GM12878 (cell line): ENCODE measurements at regions of chr14 and their contacts with region 1.

Region 1: GRCh38 chr14:51996148-51996746 is 6.9 kb downstream of the RTRAF start:
- DNase-seq: no peak
- ATAC-seq: 0 out of 3 replicates have a peak, but pooled peaks have one; percentile 22
- H3K4me3 ChIP-seq: no peak overlapping the region
- H3K27ac ChIP-seq: no peak overlapping the region
- H3K4me1 ChIP-seq: peaks cover under 1% of the 10 kb centered on the region
- H3K27me3 ChIP-seq: no peaks in the 10 kb centered on the region
- CTCF ChIP-seq: peak; percentile 50 to 60 (median 56); a peak in 5 of 6 replicates
- EP300 ChIP-seq: no peak
- POLR2A ChIP-seq: no peak
- RAD21 ChIP-seq: peak; percentile 65

Region 2: GRCh38 chr14:51828017-51828797 is 168.0 kb before region 1 on chr14:
- CTCF ChIA-PET with region 1: interaction called, 12 read pairs
- POLR2A ChIA-PET with region 1: no interaction called
- RAD21 ChIA-PET with region 1: no interaction called
- SMC1A ChIA-PET with region 1: no interaction called
- in situ Hi-C with region 1: no loop called
- intact Hi-C with region 1: no loop called
- DNase-seq: peak; percentile 74
- ATAC-seq: peak; percentile 99
- H3K4me3 ChIP-seq: no peak overlapping the region
- H3K27ac ChIP-seq: no peak overlapping the region
- H3K4me1 ChIP-seq: no peaks in the 10 kb centered on the region
- H3K27me3 ChIP-seq: no peaks in the 10 kb centered on the region
- CTCF ChIP-seq: peak in 1 of 3 experiments; percentile 26; a peak in 2 of 6 replicates
- EP300 ChIP-seq: peak in 1 of 2 experiments; percentile 17; a peak in 1 of 4 replicates
- POLR2A ChIP-seq: no peak
- RAD21 ChIP-seq: 0 out of 2 replicates have a peak, but pooled peaks have one; percentile 3

Region 3: GRCh38 chr14:52015411-52016030 is 19.3 kb after region 1 on chr14:
- CTCF ChIA-PET with region 1: interaction called, 20 read pairs
- POLR2A ChIA-PET with region 1: no interaction called
- RAD21 ChIA-PET with region 1: interaction called, 6 read pairs
- SMC1A ChIA-PET with region 1: interaction called, 3 read pairs
- in situ Hi-C with region 1: no loop called
- intact Hi-C with region 1: no loop called
- DNase-seq: no peak
- ATAC-seq: peak; percentile 50
- H3K4me3 ChIP-seq: no peak overlapping the region
- H3K27ac ChIP-seq: no peak overlapping the region
- H3K4me1 ChIP-seq: no peaks in the 10 kb centered on the region
- H3K27me3 ChIP-seq: no peaks in the 10 kb centered on the region
- CTCF ChIP-seq: peak; percentile 8 to 29 (median 21); a peak in 3 of 6 replicates
- EP300 ChIP-seq: no peak
- POLR2A ChIP-seq: no peak
- RAD21 ChIP-seq: no peak

Region 4: DNA sequence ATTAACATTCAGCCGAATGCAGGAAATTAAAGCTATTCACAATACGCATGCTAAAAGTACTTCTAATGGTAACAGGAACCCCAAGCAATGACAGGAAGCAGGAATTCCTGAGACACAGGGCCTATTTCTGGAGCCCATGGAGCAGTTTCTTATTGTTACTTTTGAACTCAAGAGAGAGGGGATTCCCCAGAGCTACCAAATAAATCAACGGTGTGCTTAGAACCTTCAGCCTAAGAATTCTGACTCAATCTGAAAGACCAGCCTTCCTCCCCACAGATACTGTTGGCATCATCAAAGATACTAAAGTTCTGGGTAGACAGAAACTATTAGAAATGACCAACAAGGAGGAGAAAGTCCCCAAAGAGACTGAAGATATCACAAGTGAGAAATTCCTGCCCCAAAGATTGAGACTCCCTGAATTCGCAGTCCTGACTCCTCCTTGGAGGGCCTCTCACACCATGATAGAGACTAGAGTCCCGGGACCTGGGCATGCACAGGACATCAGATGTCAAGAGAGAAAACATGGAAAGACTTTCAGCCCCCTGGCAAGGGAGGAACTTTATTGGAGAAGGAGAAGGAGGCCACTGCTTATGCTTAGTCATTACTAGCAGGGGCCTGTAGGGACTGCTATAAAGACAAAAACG is 25.8 kb after region 1 on chr14:
- CTCF ChIA-PET with region 1: interaction called, 20 read pairs
- POLR2A ChIA-PET with region 1: no interaction called
- RAD21 ChIA-PET with region 1: interaction called, 6 read pairs
- SMC1A ChIA-PET with region 1: interaction called, 4 read pairs
- in situ Hi-C with region 1: no loop called
- intact Hi-C with region 1: no loop called
- DNase-seq: peak; percentile 69
- ATAC-seq: peak; percentile 95
- H3K4me3 ChIP-seq: no peak overlapping the region
- H3K27ac ChIP-seq: no peak overlapping the region
- H3K4me1 ChIP-seq: peaks cover 12% of the 10 kb centered on the region
- H3K27me3 ChIP-seq: no peaks in the 10 kb centered on the region
- CTCF ChIP-seq: no peak
- EP300 ChIP-seq: peak in 1 of 2 experiments; percentile 36; a peak in 1 of 4 replicates
- POLR2A ChIP-seq: no peak
- RAD21 ChIP-seq: peak; percentile 2; the same call in 1 of the 2 replicates

Region 5: GRCh38 chr14:52069304-52070050 is 73.2 kb after region 1 on chr14:
- CTCF ChIA-PET with region 1: interaction called, 20 read pairs
- POLR2A ChIA-PET with region 1: no interaction called
- RAD21 ChIA-PET with region 1: no interaction called
- SMC1A ChIA-PET with region 1: interaction called, 3 read pairs
- in situ Hi-C with region 1: no loop called
- intact Hi-C with region 1: no loop called
- DNase-seq: no peak
- ATAC-seq: peak; percentile 58
- H3K4me3 ChIP-seq: no peak overlapping the region
- H3K27ac ChIP-seq: no peak overlapping the region
- H3K4me1 ChIP-seq: no peaks in the 10 kb centered on the region
- H3K27me3 ChIP-seq: peaks cover 13 to 16% of the 10 kb centered on the region in 2 experiments
- CTCF ChIP-seq: no peak
- EP300 ChIP-seq: no peak
- POLR2A ChIP-seq: no peak
- RAD21 ChIP-seq: no peak

Region 6: GRCh38 chr14:52091928-52092327 is 95.7 kb after region 1 on chr14:
- CTCF ChIA-PET with region 1: no interaction called
- POLR2A ChIA-PET with region 1: no interaction called
- RAD21 ChIA-PET with region 1: no interaction called
- SMC1A ChIA-PET with region 1: no interaction called
- in situ Hi-C with region 1: no loop called
- intact Hi-C with region 1: no loop called
- DNase-seq: no peak
- ATAC-seq: no peak
- H3K4me3 ChIP-seq: no peak overlapping the region
- H3K27ac ChIP-seq: no peak overlapping the region
- H3K4me1 ChIP-seq: no peaks in the 10 kb centered on the region
- H3K27me3 ChIP-seq: no peaks in the 10 kb centered on the region
- CTCF ChIP-seq: no peak
- EP300 ChIP-seq: no peak
- POLR2A ChIP-seq: no peak
- RAD21 ChIP-seq: no peak

Region 7: GRCh38 chr14:52131640-52132320 is 135.5 kb after region 1 on chr14:
- CTCF ChIA-PET with region 1: interaction called, 11 read pairs
- POLR2A ChIA-PET with region 1: no interaction called
- RAD21 ChIA-PET with region 1: interaction called, 13 read pairs
- SMC1A ChIA-PET with region 1: interaction called, 5 read pairs
- in situ Hi-C with region 1: no loop called
- intact Hi-C with region 1: loop called (anchors 2 kb)
- DNase-seq: peak; percentile 4
- ATAC-seq: peak; percentile 75
- H3K4me3 ChIP-seq: no peak overlapping the region
- H3K27ac ChIP-seq: no peak overlapping the region
- H3K4me1 ChIP-seq: no peaks in the 10 kb centered on the region
- H3K27me3 ChIP-seq: no peaks in the 10 kb centered on the region; a peak in 1 of 4 replicates
- CTCF ChIP-seq: peak; percentile 33 to 42 (median 39); a peak in 5 of 6 replicates
- EP300 ChIP-seq: no peak
- POLR2A ChIP-seq: no peak
- RAD21 ChIP-seq: peak; percentile 61

Region 8: DNA sequence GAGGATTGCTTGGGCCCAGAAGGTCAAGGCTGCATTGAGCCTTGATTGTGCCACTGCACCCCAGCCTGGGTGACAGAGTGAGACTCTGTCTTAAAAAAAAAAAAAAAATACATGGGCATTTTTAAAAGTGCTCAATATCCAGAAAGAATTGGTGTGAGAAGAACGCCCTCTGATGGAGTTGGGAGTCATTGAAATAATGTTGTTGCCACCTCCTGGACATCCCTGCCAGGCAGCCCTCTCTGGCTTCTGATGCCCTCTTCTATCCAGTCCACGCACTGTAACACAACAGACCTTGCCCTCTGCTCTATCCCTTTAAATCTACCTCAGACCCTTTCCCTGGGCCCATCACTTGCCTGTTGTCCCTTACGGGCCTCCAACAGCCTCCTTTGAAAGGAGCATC is 276.1 kb after region 1 on chr14:
- CTCF ChIA-PET with region 1: interaction called, 4 read pairs
- POLR2A ChIA-PET with region 1: no interaction called
- RAD21 ChIA-PET with region 1: interaction called, 3 read pairs
- SMC1A ChIA-PET with region 1: interaction called, 5 read pairs
- in situ Hi-C with region 1: no loop called
- intact Hi-C with region 1: loop called (anchors 5 kb)
- DNase-seq: no peak
- ATAC-seq: peak; percentile 55
- H3K4me3 ChIP-seq: no peak overlapping the region
- H3K27ac ChIP-seq: no peak overlapping the region
- H3K4me1 ChIP-seq: no peaks in the 10 kb centered on the region
- H3K27me3 ChIP-seq: peaks cover 10 to 22% of the 10 kb centered on the region in 2 experiments
- CTCF ChIP-seq: peak; percentile 31 to 37 (median 35); a peak in 4 of 6 replicates
- EP300 ChIP-seq: no peak
- POLR2A ChIP-seq: no peak
- RAD21 ChIP-seq: peak; percentile 35; the same call in 1 of the 2 replicates